Colonic mucosa (tissue), 4 donors: ENCODE measurements at regions of chr17 and their contacts with region 1.

Region 1: GRCh38 chr17:47889734-47890529 is 6.1 kb upstream of the SP2 start:
- DNase-seq: peak; percentile 93
- H3K4me3 ChIP-seq: no peak overlapping the region
- H3K27ac ChIP-seq: no peak overlapping the region
- H3K4me1 ChIP-seq: peaks cover 7% of the 10 kb centered on the region
- H3K27me3 ChIP-seq: no peaks in the 10 kb centered on the region
- CTCF ChIP-seq: peak; percentile 93

Region 2: GRCh38 chr17:47840740-47841603 is 49.0 kb before region 1 on chr17 and contains the start of gene SCRN2:
- intact Hi-C with region 1: loop called (anchors 2 kb)
- DNase-seq: peak; percentile 96
- H3K4me3 ChIP-seq: peak within 1 kb of the TSS; percentile 72
- H3K27ac ChIP-seq: peak within 1 kb of the TSS; percentile 63
- H3K4me1 ChIP-seq: peaks cover 15% of the 10 kb centered on the region
- H3K27me3 ChIP-seq: no peaks in the 10 kb centered on the region
- CTCF ChIP-seq: peak; percentile 94
- total RNA-seq, gene SCRN2: 36.8 to 40.0 TPM